Pancreas (tissue), 10 donors: ENCODE measurements at regions of chr16 and their contacts with region 1.

Region 1: DNA sequence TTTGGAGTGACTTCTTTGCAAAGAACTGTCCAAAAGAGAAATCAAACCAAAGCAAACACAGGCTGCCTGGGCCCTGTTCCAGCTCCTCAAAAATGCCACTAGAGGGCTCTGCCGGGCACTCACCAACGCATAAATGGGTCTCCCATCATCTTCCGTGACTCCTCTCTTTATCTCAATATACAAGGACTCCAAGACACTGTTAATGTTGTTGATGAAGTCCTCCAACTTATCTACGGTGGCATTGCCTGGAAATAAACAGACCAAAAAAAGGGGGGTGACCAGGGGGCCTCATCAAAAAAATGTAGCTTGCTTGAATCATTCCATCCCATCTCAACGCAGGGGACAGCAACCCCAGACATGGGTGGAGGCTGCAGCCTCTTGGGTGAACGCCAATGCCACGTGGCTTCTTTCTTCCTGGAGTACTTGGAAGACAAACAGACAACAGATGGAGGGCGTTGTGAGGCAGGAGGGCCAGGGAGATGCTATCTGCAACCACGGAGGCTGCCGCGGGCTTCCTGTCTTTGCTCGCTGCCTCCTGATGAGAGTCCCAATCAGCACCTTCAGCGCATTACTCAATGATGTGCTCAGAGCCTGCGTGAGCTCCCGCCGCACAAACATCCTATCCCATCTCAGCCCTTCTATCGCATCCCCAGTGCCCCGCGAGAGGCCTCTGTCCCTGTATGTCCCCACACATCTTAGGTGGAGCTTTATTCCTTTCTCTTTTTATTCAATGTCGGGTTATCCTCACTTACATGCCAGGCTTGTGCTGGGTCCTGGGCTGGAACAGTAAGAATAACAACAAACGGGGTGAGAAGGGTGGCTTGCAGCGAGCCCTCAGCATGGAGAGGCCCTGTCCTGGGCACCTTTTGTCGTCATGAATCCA is 32.0 kb downstream of the KDM8 start:
- DNase-seq: peak in 2 of 6 donors; percentile 67 to 68
- ATAC-seq: peak; percentile 68 to 83 (median 78)
- H3K4me3 ChIP-seq: no peak overlapping the region
- H3K27ac ChIP-seq: peak overlapping the region in 1 of 4 donors; percentile 8
- H3K4me1 ChIP-seq: peaks cover 0 to 10% (median 0%) of the 10 kb centered on the region in 3 donors
- H3K27me3 ChIP-seq: no peaks in the 10 kb centered on the region
- CTCF ChIP-seq: peak; percentile 32 to 67 (median 54)

Region 2: DNA sequence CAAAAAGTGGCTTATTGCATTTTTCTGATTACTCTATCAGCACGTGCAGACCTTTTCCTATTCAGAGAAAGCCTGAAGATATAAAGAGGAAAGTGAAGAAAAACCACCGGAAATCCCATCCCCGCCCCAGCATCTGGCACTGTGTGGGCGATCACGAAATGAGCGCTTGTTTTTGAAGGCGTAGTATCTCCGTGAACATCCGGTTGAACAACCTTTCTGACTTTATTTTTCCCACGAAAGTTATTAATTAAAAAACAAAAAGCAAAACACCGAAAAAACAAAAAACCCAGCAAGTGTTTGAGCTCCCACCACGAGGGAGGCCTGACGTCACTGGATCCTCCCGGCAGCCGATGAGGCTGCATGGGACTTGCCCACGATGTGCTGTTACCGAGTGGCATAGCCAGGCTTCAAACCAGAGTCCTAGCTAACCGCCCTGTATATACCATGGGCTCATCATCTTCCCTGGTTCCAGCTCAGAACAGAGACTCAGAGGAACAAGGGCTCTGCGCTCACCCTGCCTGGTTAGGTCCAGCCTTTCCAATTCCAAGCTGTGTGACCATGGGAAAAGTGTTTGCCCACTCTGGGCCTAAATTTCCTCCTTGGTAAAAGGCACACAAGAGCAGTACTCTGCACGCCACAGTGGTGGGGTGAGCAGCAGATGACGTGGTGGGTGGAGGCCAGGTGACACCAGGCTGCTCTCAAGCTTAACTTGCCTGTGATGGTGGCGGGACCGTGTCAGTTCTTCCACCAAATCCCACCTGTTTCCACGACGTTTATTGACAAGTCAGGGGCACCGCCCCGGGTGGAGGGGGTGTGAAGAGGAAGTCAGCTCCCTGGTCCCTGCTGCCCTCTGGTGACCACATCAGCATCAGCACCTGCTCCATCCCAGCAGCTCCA is 132.4 kb after region 1 on chr16:
- intact Hi-C with region 1: loop called in 2 of 3 experiments (anchors 5 to 10 kb)
- DNase-seq: peak; percentile 60 to 87 (median 76)
- ATAC-seq: peak; percentile 73 to 83 (median 83)
- H3K4me3 ChIP-seq: peak overlapping the region in 1 of 4 donors; percentile 30
- H3K27ac ChIP-seq: peak overlapping the region in 2 of 4 donors; percentile 53 to 66
- H3K4me1 ChIP-seq: peaks cover 16 to 30% (median 20%) of the 10 kb centered on the region in 3 donors
- H3K27me3 ChIP-seq: no peaks in the 10 kb centered on the region
- CTCF ChIP-seq: peak; percentile 63 to 85 (median 66)

Region 3: GRCh38 chr16:27374804-27375425 is 139.6 kb after region 1 on chr16:
- intact Hi-C with region 1: loop called in 1 of 3 experiments (anchors 5 kb)
- DNase-seq: peak in 1 of 6 donors; percentile 50
- ATAC-seq: peak; percentile 50 to 82 (median 74)
- H3K4me3 ChIP-seq: no peak overlapping the region
- H3K27ac ChIP-seq: no peak overlapping the region
- H3K4me1 ChIP-seq: no peaks in the 10 kb centered on the region
- H3K27me3 ChIP-seq: no peaks in the 10 kb centered on the region
- CTCF ChIP-seq: peak in 1 of 4 donors; percentile 23